Breast epithelium (tissue), 4 donors: ENCODE measurements at regions of chr7 and their contacts with region 1.

Region 1: DNA sequence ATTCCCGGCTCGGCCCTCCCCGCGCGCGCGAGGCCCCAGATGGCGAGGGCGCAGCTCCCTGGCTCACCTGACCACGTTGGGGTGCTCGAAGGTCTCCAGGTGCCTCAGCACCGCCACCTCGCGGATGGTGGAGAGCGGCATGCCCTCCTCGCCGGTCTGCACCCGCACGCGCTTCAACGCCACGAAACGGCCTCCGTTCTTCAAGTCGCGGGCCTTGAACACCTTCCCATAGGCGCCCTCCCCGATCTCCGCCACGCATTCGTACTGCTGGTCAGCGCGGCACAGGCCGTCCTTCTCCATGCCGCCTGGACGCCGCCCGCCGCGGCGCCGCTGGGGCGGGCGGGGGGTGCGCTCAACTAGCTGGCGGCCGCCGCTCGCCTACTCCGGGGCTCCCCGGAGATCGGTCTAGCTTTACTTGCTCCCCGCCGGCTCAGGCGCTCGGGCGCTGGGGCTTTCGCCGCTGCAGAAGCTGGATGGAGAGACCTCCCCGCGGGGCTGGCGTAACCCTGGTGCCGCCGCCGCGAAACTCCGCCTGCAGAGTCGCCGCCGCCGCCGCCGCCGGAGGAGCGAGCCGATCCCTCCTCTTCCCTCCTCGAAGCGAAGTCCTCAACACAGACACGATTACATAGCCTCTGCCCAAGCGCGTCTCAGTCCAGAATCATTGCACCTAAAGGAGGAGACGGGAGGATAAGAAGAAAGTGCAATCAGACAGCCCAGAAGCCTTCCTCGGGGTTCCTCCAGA is 3.2 kb downstream of the CDK6 start:
- DNase-seq: peak; percentile 77 to 83
- H3K4me3 ChIP-seq: peak overlapping the region; percentile 81 to 85 (median 83)
- H3K27ac ChIP-seq: peak overlapping the region; percentile 81 to 88
- H3K4me1 ChIP-seq: no peaks in the 10 kb centered on the region
- H3K27me3 ChIP-seq: no peaks in the 10 kb centered on the region
- CTCF ChIP-seq: peak; percentile 66 to 79 (median 75)
- POLR2A ChIP-seq: no peak

Region 2: GRCh38 chr7:92633211-92633906 is 199.8 kb before region 1 on chr7:
- intact Hi-C with region 1: loop called (anchors 10 kb)
- DNase-seq: no peak
- H3K4me3 ChIP-seq: no peak overlapping the region
- H3K27ac ChIP-seq: peak overlapping the region; percentile 41 to 52
- H3K4me1 ChIP-seq: peaks cover 0 to 14% of the 10 kb centered on the region in 2 donors
- H3K27me3 ChIP-seq: no peaks in the 10 kb centered on the region
- CTCF ChIP-seq: no peak
- POLR2A ChIP-seq: no peak

Region 3: GRCh38 chr7:92691578-92691977 is 141.6 kb before region 1 on chr7:
- intact Hi-C with region 1: loop called (anchors 10 kb)
- DNase-seq: no peak
- H3K4me3 ChIP-seq: no peak overlapping the region
- H3K27ac ChIP-seq: no peak overlapping the region
- H3K4me1 ChIP-seq: no peaks in the 10 kb centered on the region
- H3K27me3 ChIP-seq: no peaks in the 10 kb centered on the region
- CTCF ChIP-seq: peak in 2 of 3 donors; percentile 27 to 42
- POLR2A ChIP-seq: no peak

Region 4: GRCh38 chr7:92880212-92881090 is 47.3 kb after region 1 on chr7:
- intact Hi-C with region 1: no loop called
- DNase-seq: no peak
- H3K4me3 ChIP-seq: no peak overlapping the region
- H3K27ac ChIP-seq: no peak overlapping the region
- H3K4me1 ChIP-seq: no peaks in the 10 kb centered on the region
- H3K27me3 ChIP-seq: no peaks in the 10 kb centered on the region
- CTCF ChIP-seq: no peak
- POLR2A ChIP-seq: no peak

Region 5: DNA sequence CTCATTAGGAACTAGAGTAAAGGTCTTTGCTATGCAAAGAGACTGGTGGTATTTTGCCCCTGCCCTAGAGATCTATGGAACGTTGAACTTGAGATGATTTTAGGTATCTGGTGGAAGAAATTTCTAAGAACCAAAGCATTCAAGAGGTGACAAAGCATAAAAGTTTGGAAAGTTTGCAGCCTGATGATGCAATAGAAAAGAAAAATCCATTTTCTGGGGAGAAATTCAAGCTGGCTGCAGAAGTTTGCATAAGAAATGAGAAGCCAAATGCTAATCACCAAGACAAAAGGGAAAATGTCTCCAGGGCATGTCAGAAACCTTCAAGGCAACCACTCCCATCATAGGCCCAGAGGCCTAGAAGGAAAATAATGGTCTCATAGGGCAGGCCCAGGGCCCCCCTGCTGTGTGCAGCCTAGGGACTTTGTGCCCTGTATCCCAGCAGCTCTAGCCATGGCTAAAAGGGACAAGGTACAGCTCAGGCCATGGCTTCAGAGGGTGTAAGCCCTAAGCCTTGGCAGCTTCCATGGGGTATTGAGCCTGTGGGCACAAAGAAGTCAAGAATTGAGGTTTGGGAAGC is 1040.9 kb after region 1 on chr7:
- intact Hi-C with region 1: no loop called
- DNase-seq: no peak
- H3K4me3 ChIP-seq: no peak overlapping the region
- H3K27ac ChIP-seq: no peak overlapping the region
- H3K4me1 ChIP-seq: no peaks in the 10 kb centered on the region
- H3K27me3 ChIP-seq: no peaks in the 10 kb centered on the region
- CTCF ChIP-seq: no peak
- POLR2A ChIP-seq: no peak